Spleen (tissue), 13 donors: ENCODE measurements at regions of chr9 and their contacts with region 1.

Region 1: DNA sequence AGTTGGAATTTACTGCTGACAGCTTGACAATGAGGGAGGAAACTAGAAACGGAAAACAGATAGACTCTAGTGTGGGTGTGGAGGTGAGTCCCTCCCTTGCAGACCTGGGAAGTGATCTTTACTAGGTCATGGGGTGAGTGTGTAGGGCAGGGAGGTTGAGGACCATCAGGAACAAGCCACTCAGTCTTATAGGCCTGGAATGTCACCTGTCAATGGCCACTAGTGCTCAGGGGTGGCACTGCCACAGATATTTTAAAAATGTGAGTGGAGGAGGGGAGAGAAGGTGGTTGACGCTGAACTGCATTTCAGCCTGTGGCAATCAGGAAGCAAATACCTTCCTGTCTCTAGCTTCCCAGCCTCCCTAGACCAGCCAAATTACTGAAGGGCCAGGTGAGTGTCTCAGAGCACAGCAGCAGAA is 9.0 kb downstream of the OR2S2 start:
- DNase-seq: no peak
- H3K4me3 ChIP-seq: no peak overlapping the region
- H3K27ac ChIP-seq: peak overlapping the region in 5 of 8 donors; percentile 11 to 48 (median 35)
- H3K4me1 ChIP-seq: peaks cover 0 to 32% (median 12%) of the 10 kb centered on the region in 6 donors
- H3K27me3 ChIP-seq: peaks cover 0 to 35% (median 0%) of the 10 kb centered on the region in 7 donors
- CTCF ChIP-seq: no peak
- POLR2A ChIP-seq: no peak

Region 2: DNA sequence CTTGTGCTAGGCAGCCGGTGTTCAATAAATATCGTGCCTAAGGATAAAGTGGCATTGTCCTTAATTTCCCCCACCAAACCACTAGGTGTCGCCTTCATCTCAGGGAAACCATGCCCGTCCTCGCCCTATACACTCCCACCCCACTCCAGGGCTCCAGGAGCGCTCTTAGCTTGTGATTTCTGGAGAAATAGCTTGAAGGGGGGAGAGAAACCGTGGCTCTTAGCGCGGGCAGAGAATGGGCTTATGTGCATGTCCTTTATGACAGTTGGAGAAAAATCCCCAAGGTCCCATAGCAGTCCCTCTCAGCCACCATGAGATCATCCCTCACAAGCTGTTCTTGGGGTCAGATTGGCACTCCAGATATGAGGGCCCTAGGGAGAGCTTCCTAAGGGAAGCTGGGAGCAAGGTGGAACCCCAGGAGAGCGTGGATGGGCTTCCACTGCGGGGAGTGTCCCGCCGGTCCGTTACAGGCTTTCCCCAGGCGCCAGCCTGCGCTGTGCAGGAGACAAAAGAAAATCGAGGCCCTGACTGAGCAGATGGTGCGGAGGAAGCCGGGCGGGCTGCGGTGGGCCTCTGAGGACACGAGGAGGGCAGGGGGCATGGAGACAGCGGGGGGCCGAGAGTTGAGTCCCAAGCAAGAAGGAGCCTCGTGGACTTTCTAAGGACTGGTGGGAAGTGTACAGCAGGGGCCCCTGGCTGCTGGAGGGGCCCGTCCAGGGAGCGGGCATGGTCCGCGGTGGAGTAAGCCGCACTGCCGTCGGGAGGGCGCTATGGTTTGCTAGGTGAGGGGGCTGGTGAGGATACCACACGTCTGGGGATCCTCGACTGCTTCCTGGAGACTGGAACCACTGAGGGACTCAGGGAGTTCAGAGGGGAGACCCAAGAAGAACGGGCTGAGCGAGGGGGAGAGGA is 158.3 kb before region 1 on chr9:
- intact Hi-C with region 1: no loop called
- DNase-seq: no peak
- H3K4me3 ChIP-seq: peak overlapping the region in 3 of 8 donors; percentile 32 to 62 (median 44)
- H3K27ac ChIP-seq: peak overlapping the region in 5 of 8 donors; percentile 25 to 60 (median 34)
- H3K4me1 ChIP-seq: peaks cover 7 to 22% (median 14%) of the 10 kb centered on the region in 6 donors
- H3K27me3 ChIP-seq: peaks cover 0 to 12% (median 0%) of the 10 kb centered on the region in 7 donors
- CTCF ChIP-seq: peak; percentile 65 to 95 (median 82)
- POLR2A ChIP-seq: no peak

Region 3: GRCh38 chr9:35903049-35903448 is 45.9 kb before region 1 on chr9:
- intact Hi-C with region 1: loop called (anchors 2 kb)
- DNase-seq: no peak
- H3K4me3 ChIP-seq: no peak overlapping the region
- H3K27ac ChIP-seq: no peak overlapping the region
- H3K4me1 ChIP-seq: peaks cover 32 to 54% (median 48%) of the 10 kb centered on the region in 6 donors
- H3K27me3 ChIP-seq: peaks cover 0 to 22% (median 0%) of the 10 kb centered on the region in 7 donors
- CTCF ChIP-seq: peak; percentile 50 to 82 (median 66)
- POLR2A ChIP-seq: no peak